AG04449 (cell line): ENCODE measurements at regions of chr16 and their contacts with region 1.

Region 1: DNA sequence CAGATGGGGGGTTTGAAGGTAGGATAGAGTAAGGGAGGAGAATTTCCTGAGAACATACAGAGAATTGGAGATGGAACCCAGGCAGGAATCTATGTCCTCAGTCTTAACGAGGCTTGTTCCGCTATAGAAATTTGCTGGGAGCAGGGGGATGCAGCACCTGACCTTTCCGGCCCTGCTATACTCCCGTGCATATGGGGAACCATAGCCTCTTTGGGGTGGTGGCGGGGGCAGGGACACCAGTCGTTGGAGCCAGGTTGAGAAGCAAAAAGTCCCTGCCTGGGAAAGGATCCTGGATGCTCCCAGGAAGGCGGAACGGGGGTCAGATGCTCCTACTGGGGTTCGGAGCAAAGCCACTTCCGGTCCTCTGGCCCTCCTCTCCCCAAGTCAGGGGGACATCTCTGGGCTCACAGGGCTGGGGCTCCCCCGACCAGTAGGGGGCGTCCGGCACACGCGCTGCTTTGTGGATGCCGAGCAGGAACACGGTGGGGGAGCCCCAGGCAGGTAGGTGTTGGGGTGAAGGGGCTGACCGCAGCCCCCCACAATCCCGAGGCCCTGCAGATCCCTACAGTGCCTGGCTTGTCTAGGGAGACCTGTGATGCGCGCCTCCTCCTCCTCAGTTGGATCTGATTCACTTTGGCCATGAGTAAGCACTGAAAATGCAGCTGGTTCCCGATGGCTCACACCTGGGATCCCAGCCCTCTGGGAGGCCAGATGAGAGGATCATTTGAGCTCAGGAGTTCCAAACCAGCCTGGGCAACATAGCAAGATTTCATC is 15.5 kb upstream of the TFAP4 start:
- DNase-seq: no peak
- H3K4me3 ChIP-seq: no peak overlapping the region
- CTCF ChIP-seq: peak; percentile 95

Region 2: GRCh38 chr16:4140652-4141051 is 147.7 kb before region 1 on chr16:
- CTCF ChIA-PET with region 1: no interaction called
- POLR2A ChIA-PET with region 1: no interaction called
- DNase-seq: no peak
- H3K4me3 ChIP-seq: no peak overlapping the region
- CTCF ChIP-seq: no peak

Region 3: GRCh38 chr16:4271176-4272066 is 16.9 kb before region 1 on chr16:
- CTCF ChIA-PET with region 1: interaction called, 30 read pairs
- POLR2A ChIA-PET with region 1: interaction called, 5 read pairs
- DNase-seq: no peak
- H3K4me3 ChIP-seq: peak overlapping the region; percentile 93
- CTCF ChIP-seq: no peak

Region 4: DNA sequence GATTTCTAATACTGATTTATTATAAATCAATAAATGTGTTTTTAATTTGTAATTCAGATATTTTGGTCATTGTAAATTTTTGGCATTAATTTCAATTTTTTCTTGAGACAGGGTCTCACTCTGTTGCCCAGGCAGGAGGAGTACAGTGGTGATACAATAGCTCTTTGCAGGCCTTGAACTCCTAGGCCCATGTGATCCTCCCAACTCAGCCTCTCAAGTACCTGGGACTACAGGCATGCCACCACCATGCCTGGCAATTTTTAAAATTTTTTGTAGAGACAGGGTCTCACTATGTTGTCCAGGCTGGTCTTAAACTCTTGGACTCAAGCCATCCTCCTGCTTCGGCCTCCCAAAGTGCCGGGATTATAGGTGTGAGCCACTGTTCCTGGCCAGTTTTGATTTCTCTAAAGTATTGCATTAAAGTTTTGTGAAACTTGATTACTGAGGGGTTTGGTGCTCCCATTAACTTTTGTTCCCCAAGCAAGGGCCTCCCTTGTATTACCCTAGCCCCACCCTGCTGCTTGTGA is 10.3 kb before region 1 on chr16:
- CTCF ChIA-PET with region 1: interaction called, 30 read pairs
- POLR2A ChIA-PET with region 1: interaction called, 5 read pairs
- DNase-seq: no peak
- H3K4me3 ChIP-seq: no peak overlapping the region
- CTCF ChIP-seq: no peak

Region 5: DNA sequence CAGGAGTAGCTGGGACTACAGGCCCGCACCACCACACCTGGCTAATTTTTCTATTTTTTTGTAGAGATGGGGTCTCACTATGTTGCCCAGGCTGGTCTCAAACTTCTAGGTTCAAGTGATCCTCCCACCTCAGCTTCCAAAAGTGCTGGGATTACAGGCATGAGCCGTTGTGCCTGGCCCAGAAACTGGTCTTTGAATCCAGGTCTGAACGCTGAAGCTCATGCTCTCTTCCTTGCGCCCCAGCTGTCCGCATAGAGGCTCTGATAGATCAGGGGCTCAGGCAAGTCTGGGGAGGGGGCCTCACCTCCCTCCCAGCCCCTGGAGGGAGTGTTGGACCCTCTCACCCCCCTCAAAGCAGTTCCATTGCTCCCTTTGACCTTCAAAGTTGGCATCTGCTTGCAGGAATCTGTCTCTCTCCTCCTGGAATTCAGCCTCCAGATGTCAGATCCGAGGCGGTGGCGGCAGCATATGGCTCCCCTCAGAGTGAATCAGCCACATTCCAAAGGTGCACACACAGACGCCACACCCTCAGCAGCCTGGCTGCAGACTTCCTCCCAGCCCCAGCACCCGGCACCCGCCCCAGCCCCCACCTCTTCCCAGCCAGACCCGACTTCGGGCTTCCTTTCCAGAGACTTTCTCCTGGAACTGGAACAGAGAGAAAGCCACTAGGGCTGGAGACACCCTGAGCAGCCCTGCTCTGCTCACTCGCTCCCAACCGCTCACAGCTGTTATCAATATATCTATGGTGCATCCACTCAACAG is 10.6 kb after region 1 on chr16:
- CTCF ChIA-PET with region 1: interaction called, 44 read pairs
- POLR2A ChIA-PET with region 1: no interaction called
- DNase-seq: no peak
- H3K4me3 ChIP-seq: peak overlapping the region; percentile 32
- CTCF ChIP-seq: no peak

Region 6: GRCh38 chr16:4307215-4308037 is 19.1 kb after region 1 on chr16:
- CTCF ChIA-PET with region 1: interaction called, 44 read pairs
- POLR2A ChIA-PET with region 1: interaction called, 3 read pairs
- DNase-seq: peak; percentile 67
- H3K4me3 ChIP-seq: peak overlapping the region; percentile 70
- CTCF ChIP-seq: no peak

Region 7: GRCh38 chr16:4323845-4324478 is 35.6 kb after region 1 on chr16:
- CTCF ChIA-PET with region 1: interaction called, 104 read pairs
- POLR2A ChIA-PET with region 1: no interaction called
- DNase-seq: no peak
- H3K4me3 ChIP-seq: no peak overlapping the region; the same call in 1 of the 2 replicates
- CTCF ChIP-seq: no peak

Region 8: GRCh38 chr16:4393240-4393600 is 104.9 kb after region 1 on chr16:
- CTCF ChIA-PET with region 1: no interaction called
- POLR2A ChIA-PET with region 1: no interaction called
- DNase-seq: no peak
- H3K4me3 ChIP-seq: no peak overlapping the region
- CTCF ChIP-seq: no peak

Region 9: GRCh38 chr16:4410335-4411075 is 122.2 kb after region 1 on chr16:
- CTCF ChIA-PET with region 1: interaction called, 10 read pairs
- POLR2A ChIA-PET with region 1: no interaction called
- DNase-seq: peak; percentile 80
- H3K4me3 ChIP-seq: no peak overlapping the region
- CTCF ChIP-seq: no peak